Breast epithelium (tissue), 4 donors: ENCODE measurements at regions of chr17 and their contacts with region 1.

Region 1: DNA sequence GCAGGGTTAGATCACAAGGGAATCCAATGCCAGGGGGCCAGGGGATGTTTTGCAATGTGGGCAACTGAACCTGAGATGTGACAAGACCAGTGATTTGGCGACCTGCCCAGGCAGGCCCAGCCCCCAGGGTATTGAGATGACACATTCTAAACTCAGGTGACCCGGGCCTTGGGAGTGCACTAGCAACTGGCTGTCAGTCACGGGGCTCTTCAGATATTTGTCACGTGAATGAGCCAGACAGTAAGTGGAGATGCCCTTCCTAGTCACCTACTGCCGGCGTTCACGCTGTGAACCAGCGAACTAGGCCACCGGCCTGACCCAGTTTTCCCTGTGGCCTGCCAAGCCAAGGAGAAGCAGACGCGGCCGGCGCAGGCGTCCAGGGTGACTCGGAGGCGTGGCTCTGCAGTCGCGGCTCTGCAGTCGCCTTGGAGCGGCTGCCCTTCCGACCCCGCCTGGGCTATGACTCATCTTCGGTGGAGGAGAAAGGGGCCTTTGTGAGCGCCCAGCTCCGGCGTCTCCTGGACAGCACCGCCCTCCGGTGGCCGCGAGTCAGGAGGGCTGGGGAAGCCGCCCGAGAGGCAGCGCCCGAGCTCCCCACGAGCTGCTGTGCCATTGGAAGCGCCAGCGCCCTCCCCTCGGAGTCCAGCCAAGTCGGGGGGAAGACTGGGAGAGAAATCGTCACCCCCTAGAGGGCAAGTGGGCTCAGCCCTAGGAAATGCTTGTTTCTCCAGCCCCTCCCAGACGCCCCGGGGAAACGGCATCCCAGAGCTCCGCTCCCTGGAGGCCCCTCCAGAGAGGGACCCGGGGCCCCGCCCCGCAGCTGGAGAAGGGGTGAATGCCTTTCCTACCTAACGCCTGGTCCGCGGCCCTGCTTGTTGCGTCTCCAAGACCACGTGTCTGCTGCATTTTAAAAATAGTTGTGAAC is 38.8 kb downstream of the WSB1 start:
- DNase-seq: peak; percentile 98
- H3K4me3 ChIP-seq: peak overlapping the region; percentile 50 to 71 (median 53)
- H3K27ac ChIP-seq: peak overlapping the region; percentile 93 to 97
- H3K4me1 ChIP-seq: peaks cover 7 to 8% of the 10 kb centered on the region in 2 donors
- H3K27me3 ChIP-seq: no peaks in the 10 kb centered on the region
- CTCF ChIP-seq: peak; percentile 65 to 93 (median 92)
- POLR2A ChIP-seq: no peak

Region 2: DNA sequence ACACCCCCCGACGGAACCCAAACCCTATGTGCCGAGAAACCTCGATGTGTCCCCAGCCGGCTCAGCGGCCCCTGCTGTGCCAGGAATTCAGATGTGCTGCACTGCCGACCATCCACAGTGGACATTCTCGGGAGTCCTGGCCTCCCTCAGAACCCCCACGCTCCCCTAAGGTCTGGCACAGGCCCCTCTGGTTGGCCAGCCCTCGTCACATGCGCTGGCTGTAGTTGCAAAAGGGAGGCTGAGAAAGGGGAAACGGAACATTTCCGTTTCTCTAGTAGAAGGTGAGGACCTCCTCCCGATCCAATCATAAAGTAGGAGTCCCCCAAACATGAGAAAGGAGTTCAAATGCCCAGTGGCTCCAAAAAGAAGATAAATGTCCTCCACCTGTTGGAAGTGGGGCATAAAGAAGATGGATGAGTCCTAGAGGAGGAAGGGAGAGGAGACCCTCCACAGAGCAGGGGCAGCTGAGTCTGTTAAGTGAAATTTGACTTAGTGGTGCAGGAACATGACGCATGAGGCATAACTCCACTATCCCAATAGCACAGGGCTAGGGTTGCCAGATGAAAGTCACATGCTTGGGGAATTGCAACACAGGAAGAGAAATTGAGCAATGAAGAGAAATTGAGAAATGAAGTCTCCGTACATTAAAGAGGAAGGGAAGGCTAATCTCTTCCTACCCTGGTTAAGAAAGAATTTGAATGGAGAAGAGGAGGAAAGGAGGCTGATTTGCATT is 88.1 kb before region 1 on chr17:
- intact Hi-C with region 1: loop called (anchors 5 kb)
- DNase-seq: peak in 1 of 2 donors; percentile 78
- H3K4me3 ChIP-seq: peak overlapping the region; percentile 15 to 47 (median 26)
- H3K27ac ChIP-seq: peak overlapping the region; percentile 89 to 93
- H3K4me1 ChIP-seq: peaks cover 3 to 42% of the 10 kb centered on the region in 2 donors
- H3K27me3 ChIP-seq: no peaks in the 10 kb centered on the region
- CTCF ChIP-seq: no peak
- POLR2A ChIP-seq: peak; percentile 27

Region 3: GRCh38 chr17:27293898-27294688 is 38.7 kb before region 1 on chr17 and contains the start of gene WSB1:
- intact Hi-C with region 1: loop called (anchors 2 kb)
- DNase-seq: peak; percentile 93 to 94
- H3K4me3 ChIP-seq: peak within 1 kb of the TSS; percentile 74 to 96 (median 80)
- H3K27ac ChIP-seq: peak within 1 kb of the TSS; percentile 100
- H3K4me1 ChIP-seq: no peaks in the 10 kb centered on the region
- H3K27me3 ChIP-seq: no peaks in the 10 kb centered on the region
- CTCF ChIP-seq: peak in 1 of 3 donors; percentile 23
- POLR2A ChIP-seq: peak; percentile 98
- total RNA-seq, gene WSB1: 90.6 to 219 (median 160) TPM